Activated naive CD8-positive, alpha-beta T cell treated with anti-CD3 and anti-CD28 coated beads, Interleukin-2, amount 10 ng/mL, durations not matched to agents 7 days and 5 days (primary cell): ENCODE measurements at regions of chr10 and their contacts with region 1.

Region 1: GRCh38 chr10:70093335-70093944 is 39.2 kb downstream of the AIFM2 start:
- DNase-seq: peak; percentile 46
- ATAC-seq: peak; percentile 83
- H3K4me3 Mint-ChIP-seq: peak overlapping the region; percentile 91
- H3K27ac Mint-ChIP-seq: peak overlapping the region; percentile 98
- H3K4me1 Mint-ChIP-seq: peaks cover 37% of the 10 kb centered on the region
- H3K27me3 Mint-ChIP-seq: no peaks in the 10 kb centered on the region

Region 2: GRCh38 chr10:69936091-69936490 is 157.3 kb before region 1 on chr10:
- POLR2A ChIA-PET with region 1: no interaction called
- DNase-seq: no peak
- ATAC-seq: no peak
- H3K4me3 Mint-ChIP-seq: no peak overlapping the region
- H3K27ac Mint-ChIP-seq: no peak overlapping the region
- H3K4me1 Mint-ChIP-seq: no peaks in the 10 kb centered on the region
- H3K27me3 Mint-ChIP-seq: no peaks in the 10 kb centered on the region

Region 3: DNA sequence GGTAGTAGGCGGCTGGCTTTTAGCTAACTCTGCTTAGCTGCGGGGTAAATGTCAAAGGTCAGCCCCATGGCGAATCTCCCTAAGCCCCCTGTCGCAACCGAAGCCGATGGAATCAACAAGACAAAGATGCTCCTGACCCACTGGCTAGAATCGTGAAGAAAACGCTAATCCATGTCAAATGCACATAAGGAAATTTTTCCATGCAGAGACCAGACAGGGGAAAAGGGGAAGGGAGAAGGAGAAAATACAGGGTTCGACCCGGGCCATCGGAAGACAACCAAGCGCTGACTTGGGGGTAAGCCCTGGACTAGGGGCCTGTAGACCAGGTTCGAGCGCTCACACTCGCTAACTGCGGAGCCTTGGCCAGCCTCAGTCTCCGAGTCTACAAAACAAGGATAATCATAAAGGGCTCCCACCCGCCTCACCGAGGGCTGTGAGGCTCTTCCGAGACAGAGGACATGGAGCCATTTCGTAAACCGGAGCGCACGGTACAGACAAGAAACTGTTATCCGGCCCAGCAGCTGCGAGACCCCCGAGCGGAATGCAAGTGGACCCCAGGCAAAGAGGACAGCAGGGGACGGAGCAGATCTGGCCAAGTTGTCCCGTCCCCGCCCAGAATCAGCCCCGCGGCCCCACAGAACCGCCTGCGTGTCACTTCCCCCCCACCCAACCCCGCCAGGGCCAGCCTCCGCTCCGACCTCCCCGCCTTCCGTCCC is 76.4 kb after region 1 on chr10:
- POLR2A ChIA-PET with region 1: interaction called, 32 read pairs
- DNase-seq: no peak
- ATAC-seq: peak; percentile 5
- H3K4me3 Mint-ChIP-seq: peak overlapping the region; percentile 85
- H3K27ac Mint-ChIP-seq: peak overlapping the region; percentile 98
- H3K4me1 Mint-ChIP-seq: peaks cover 57% of the 10 kb centered on the region
- H3K27me3 Mint-ChIP-seq: no peaks in the 10 kb centered on the region